ENCODE measurements at regions of chr10 and their contacts with region 1.

Region 1: GRCh38 chr10:48656241-48656913 is 28.3 kb upstream of the WDFY4 start:
- DNase-seq: peak; percentile 80 to 100 (median 93)
- ATAC-seq: peak; percentile 98
- H3K4me3 ChIP-seq: peak overlapping the region; percentile 39 to 56
- H3K27ac ChIP-seq: no peak overlapping the region
- H3K4me1 ChIP-seq: peaks cover 6 to 22% of the 10 kb centered on the region in 2 donors
- H3K27me3 ChIP-seq: peaks cover 0 to 48% of the 10 kb centered on the region in 2 donors
- CTCF ChIP-seq: peak; percentile 97 to 99

Region 2: DNA sequence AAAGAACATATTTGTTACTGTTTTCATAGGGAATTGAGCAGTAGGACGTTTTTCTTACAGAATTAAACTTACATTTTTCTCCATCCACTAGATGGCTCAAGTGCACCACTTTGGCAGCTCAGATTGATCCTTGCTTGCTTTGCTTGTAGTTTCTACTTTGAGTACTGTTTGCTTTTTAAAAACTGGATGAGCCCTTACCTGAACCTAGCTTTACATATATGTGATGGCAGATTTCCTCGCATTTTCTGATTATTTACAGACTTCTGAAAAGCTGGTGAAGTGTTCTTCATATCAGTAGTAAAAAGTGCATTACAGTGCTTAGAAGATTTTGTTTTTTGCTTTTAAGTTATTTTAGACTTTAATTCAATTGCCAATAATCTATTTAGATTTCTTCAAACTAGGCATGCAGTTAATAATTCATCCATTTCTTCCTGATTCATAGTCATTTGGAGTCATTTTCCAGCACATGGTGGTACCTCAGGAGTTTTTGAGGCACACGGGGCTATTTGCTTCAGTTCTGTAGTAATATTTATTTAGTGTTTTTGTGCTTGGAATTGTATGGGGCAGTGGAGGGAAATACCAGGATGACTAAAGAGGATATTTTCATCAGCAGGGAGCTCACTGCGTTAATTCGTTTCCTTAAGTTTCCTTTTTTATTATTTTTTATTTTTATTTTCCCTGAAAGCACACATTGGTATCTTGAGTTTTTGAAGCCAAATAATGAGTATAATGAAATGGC is 292.6 kb before region 1 on chr10:
- intact Hi-C with region 1: loop called in 1 of 2 experiments (anchors 5 kb)
- DNase-seq: peak in 2 of 4 donors; percentile 54 to 81
- ATAC-seq: peak; percentile 95
- H3K4me3 ChIP-seq: no peak overlapping the region
- H3K27ac ChIP-seq: no peak overlapping the region
- H3K4me1 ChIP-seq: peaks cover 11 to 30% of the 10 kb centered on the region in 2 donors
- H3K27me3 ChIP-seq: no peaks in the 10 kb centered on the region
- CTCF ChIP-seq: peak; percentile 21 to 63

Region 3: GRCh38 chr10:48506147-48506917 is 150.0 kb before region 1 on chr10:
- intact Hi-C with region 1: no loop called
- DNase-seq: no peak
- ATAC-seq: peak; percentile 58
- H3K4me3 ChIP-seq: no peak overlapping the region
- H3K27ac ChIP-seq: no peak overlapping the region
- H3K4me1 ChIP-seq: peaks cover 0 to 18% of the 10 kb centered on the region in 2 donors
- H3K27me3 ChIP-seq: no peaks in the 10 kb centered on the region
- CTCF ChIP-seq: peak in 1 of 2 donors; percentile 6

Region 4: DNA sequence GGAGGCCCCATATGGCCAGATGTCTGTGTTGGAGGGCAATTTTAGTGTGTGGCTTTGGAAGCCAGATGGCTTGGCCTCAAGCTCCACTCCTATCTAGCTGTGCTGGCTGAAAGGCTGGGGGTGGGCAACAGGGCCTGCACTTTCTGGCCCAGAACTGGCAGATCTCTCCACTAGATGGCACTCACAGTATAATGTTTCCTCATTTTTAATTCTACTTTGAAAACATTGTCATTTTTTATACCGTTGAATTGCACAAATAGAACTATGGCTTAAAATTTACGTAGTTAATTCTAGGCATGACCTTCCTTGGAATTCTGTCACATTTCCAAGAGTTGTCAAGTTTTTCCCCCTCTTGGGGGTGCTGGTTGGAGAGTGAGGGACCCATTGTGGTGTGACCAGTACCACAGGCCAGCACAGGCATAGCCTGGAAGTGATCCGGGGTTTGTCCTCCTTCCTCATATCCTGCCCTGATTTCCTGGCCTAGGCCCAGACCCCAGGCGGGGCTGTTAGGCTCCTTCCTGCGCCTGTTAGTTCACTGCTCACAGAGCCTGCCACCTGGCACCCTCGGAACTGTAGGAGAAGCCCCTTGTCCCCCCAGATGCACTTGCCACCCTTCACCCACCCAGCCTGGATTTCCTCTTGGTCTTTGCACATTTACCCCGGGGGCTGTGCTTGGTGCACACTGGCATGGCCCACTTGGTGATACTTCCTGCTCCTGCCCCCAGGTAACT is 104.4 kb before region 1 on chr10:
- intact Hi-C with region 1: loop called in 1 of 2 experiments (anchors 5 kb)
- DNase-seq: peak in 2 of 4 donors; percentile 49 to 65
- ATAC-seq: peak; percentile 84
- H3K4me3 ChIP-seq: no peak overlapping the region
- H3K27ac ChIP-seq: no peak overlapping the region
- H3K4me1 ChIP-seq: peaks cover 0 to 3% of the 10 kb centered on the region in 2 donors
- H3K27me3 ChIP-seq: no peaks in the 10 kb centered on the region
- CTCF ChIP-seq: peak; percentile 45 to 83

Region 5: DNA sequence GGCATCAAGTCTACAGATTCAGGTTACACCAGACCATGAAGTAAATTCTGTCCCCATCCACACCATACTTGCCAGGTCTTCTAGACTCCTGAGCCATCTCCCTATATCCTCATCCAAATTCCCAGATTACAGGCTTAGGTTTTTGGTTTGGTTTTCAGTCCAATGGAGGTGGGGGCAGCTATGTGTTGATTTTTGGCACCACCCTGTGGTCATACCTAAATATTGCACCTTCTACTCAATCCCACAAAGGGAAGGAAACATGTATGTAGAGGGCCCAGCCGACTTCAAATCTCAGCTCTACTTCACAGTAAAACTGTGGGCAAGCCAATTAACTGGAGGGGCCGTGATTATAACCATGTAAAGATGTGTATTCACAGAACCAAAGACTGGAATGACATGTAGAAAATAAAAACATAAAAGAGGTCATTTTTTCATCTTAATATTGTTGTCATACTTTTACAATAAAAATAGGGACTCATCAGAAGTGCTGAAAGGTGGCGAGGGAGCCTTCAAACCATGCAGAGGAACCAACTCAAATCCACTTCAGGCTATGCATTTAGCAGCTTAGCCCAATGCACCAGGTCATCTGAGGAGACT is 862.7 kb after region 1 on chr10:
- intact Hi-C with region 1: loop called in 1 of 2 experiments (anchors 10 kb)
- DNase-seq: peak in 2 of 4 donors; percentile 13 to 41
- ATAC-seq: peak; percentile 89
- H3K4me3 ChIP-seq: no peak overlapping the region
- H3K27ac ChIP-seq: no peak overlapping the region
- H3K4me1 ChIP-seq: peaks cover 0 to 6% of the 10 kb centered on the region in 2 donors
- H3K27me3 ChIP-seq: no peaks in the 10 kb centered on the region
- CTCF ChIP-seq: peak; percentile 49 to 68

Measured in left lung (tissue), 14 donors.